GM12878 (cell line): ENCODE measurements at regions of chr17 and their contacts with region 1.

Region 1: GRCh38 chr17:28951991-28952975 is 965 bp upstream of the PHF12 start:
- DNase-seq: peak; percentile 100
- ATAC-seq: peak; percentile 82
- H3K4me3 ChIP-seq: peak overlapping the region; percentile 83
- H3K27ac ChIP-seq: peak overlapping the region; percentile 74
- H3K4me1 ChIP-seq: peaks cover 4% of the 10 kb centered on the region
- H3K27me3 ChIP-seq: no peaks in the 10 kb centered on the region
- CTCF ChIP-seq: no peak
- EP300 ChIP-seq: peak in 1 of 2 experiments; percentile 31; a peak in 1 of 4 replicates
- POLR2A ChIP-seq: peak; percentile 85
- RAD21 ChIP-seq: no peak

Region 2: DNA sequence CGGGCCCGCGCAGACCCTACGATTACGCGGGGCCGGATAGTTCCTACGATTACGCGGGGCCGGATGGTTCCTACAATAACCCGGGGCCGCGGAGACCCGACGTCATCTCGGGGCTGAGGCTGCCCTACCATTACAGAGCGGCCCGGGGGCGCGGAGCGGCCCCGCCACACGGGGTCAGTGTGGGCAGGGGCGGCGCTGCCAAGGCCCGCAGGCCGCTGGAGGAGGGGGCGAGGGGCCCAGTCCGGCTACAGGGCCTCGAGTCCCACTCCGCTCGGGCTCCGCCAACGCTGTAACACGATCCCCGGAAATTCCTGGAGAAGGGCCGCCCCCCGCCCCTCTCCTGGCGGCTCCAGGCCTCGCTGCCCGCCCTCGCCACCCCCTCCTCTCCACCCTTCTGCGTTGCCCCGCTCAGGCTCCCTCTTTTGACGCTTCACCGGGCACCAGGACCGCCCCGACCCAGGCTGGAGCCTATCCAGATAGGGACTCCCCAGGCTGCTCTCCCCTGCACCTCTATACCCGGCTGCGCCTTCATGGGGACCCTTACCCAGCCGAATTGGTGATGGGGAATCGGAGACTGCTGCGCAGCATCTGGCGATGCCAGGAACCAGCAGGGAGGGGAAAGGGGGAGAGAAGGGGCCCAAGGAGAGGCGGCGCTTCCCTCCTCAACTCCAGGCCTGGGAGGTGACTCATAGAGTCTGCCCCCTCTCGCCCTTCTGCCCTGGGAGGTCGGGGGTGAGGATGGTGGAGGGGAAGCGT is 234.5 kb before region 1 on chr17 and contains the start of gene RAB34:
- CTCF ChIA-PET with region 1: interaction called, 6 read pairs
- POLR2A ChIA-PET with region 1: interaction called, 13 read pairs
- RAD21 ChIA-PET with region 1: interaction called, 8 read pairs
- SMC1A ChIA-PET with region 1: interaction called, 15 read pairs
- in situ Hi-C with region 1: no loop called
- intact Hi-C with region 1: no loop called
- DNase-seq: no peak
- ATAC-seq: peak; percentile 31
- H3K4me3 ChIP-seq: peak within 1 kb of the TSS; percentile 55
- H3K27ac ChIP-seq: peak within 1 kb of the TSS; percentile 39
- H3K4me1 ChIP-seq: peaks cover 11% of the 10 kb centered on the region
- H3K27me3 ChIP-seq: no peaks in the 10 kb centered on the region
- CTCF ChIP-seq: peak in 2 of 3 experiments; percentile 15 to 32; a peak in 2 of 6 replicates
- EP300 ChIP-seq: no peak
- POLR2A ChIP-seq: peak; percentile 11; the same call in 1 of the 2 replicates
- RAD21 ChIP-seq: no peak
- polyA plus RNA-seq, gene RAB34: 14.4 to 32.6 TPM

Region 3: GRCh38 chr17:28889996-28890395 is 62.3 kb before region 1 on chr17:
- CTCF ChIA-PET with region 1: interaction called, 4 read pairs
- POLR2A ChIA-PET with region 1: interaction called, 24 read pairs
- RAD21 ChIA-PET with region 1: interaction called, 5 read pairs
- SMC1A ChIA-PET with region 1: interaction called, 8 read pairs
- in situ Hi-C with region 1: no loop called
- intact Hi-C with region 1: no loop called
- DNase-seq: no peak
- ATAC-seq: no peak
- H3K4me3 ChIP-seq: no peak overlapping the region
- H3K27ac ChIP-seq: no peak overlapping the region
- H3K4me1 ChIP-seq: peaks cover 59% of the 10 kb centered on the region
- H3K27me3 ChIP-seq: no peaks in the 10 kb centered on the region
- CTCF ChIP-seq: no peak
- EP300 ChIP-seq: no peak
- POLR2A ChIP-seq: no peak
- RAD21 ChIP-seq: no peak

Region 4: GRCh38 chr17:28902819-28903545 is 49.3 kb before region 1 on chr17 and contains the start of gene DHRS13:
- CTCF ChIA-PET with region 1: interaction called, 18 read pairs
- POLR2A ChIA-PET with region 1: interaction called, 11 read pairs
- RAD21 ChIA-PET with region 1: interaction called, 21 read pairs
- SMC1A ChIA-PET with region 1: interaction called, 6 read pairs
- in situ Hi-C with region 1: no loop called
- intact Hi-C with region 1: loop called (anchors 2 kb)
- DNase-seq: peak; percentile 81
- ATAC-seq: peak; percentile 91
- H3K4me3 ChIP-seq: peak within 1 kb of the TSS; percentile 82
- H3K27ac ChIP-seq: no peak within 1 kb of the TSS; the same call in 1 of the 2 replicates
- H3K4me1 ChIP-seq: peaks cover 16% of the 10 kb centered on the region
- H3K27me3 ChIP-seq: no peaks in the 10 kb centered on the region
- CTCF ChIP-seq: peak; percentile 89 to 100 (median 97)
- EP300 ChIP-seq: peak in 1 of 2 experiments; percentile 51; a peak in 1 of 4 replicates
- POLR2A ChIP-seq: peak; percentile 70
- RAD21 ChIP-seq: peak; percentile 54
- polyA plus RNA-seq, gene DHRS13: 0.18 TPM in 1 of 2 experiments, not detected in the other

Region 5: GRCh38 chr17:28937044-28937729 is 15.1 kb before region 1 on chr17:
- CTCF ChIA-PET with region 1: interaction called, 15 read pairs
- POLR2A ChIA-PET with region 1: interaction called, 3 read pairs
- RAD21 ChIA-PET with region 1: interaction called, 6 read pairs
- SMC1A ChIA-PET with region 1: interaction called, 11 read pairs
- in situ Hi-C with region 1: no loop called
- intact Hi-C with region 1: no loop called
- DNase-seq: no peak
- ATAC-seq: no peak
- H3K4me3 ChIP-seq: no peak overlapping the region
- H3K27ac ChIP-seq: no peak overlapping the region
- H3K4me1 ChIP-seq: peaks cover 11% of the 10 kb centered on the region; the same call in 1 of the 2 replicates
- H3K27me3 ChIP-seq: no peaks in the 10 kb centered on the region
- CTCF ChIP-seq: no peak
- EP300 ChIP-seq: no peak
- POLR2A ChIP-seq: no peak
- RAD21 ChIP-seq: no peak

Region 6: DNA sequence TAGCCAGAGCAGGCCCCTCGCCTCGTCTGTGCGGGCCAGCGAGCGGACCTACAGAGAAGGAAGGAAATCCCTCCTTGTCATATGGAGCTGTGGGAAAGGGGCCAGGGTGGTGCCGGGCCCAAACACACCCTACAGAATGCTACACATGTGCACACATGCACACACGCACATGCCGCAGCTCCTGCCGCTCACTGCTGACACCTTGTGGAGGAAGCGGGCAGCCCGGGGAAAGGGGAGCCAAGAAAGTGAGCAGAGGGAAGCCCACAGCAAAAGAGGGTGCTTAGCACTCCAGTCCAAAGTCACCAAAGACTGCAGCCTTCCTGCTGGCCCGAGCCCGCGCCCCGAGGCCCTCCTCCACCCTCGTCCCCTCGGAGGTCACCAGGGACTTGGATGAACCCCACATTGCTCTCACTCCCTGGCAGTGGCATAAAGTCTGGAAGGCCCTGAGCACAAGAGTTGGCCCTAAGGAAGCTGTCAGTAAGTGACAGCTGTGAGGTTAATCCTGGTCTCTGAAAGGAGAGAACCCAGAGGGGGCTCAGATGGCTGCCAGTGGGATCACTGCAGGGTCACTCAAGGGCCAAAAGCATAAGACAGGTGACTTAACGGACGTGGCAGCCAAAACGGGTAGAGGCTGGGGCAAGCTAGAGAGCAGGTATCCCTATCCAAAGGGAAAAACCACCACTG is 159.7 kb after region 1 on chr17:
- CTCF ChIA-PET with region 1: interaction called, 18 read pairs
- POLR2A ChIA-PET with region 1: no interaction called
- RAD21 ChIA-PET with region 1: interaction called, 6 read pairs
- SMC1A ChIA-PET with region 1: interaction called, 3 read pairs
- in situ Hi-C with region 1: no loop called
- intact Hi-C with region 1: no loop called
- DNase-seq: no peak
- ATAC-seq: peak; percentile 93
- H3K4me3 ChIP-seq: no peak overlapping the region
- H3K27ac ChIP-seq: no peak overlapping the region
- H3K4me1 ChIP-seq: no peaks in the 10 kb centered on the region
- H3K27me3 ChIP-seq: no peaks in the 10 kb centered on the region
- CTCF ChIP-seq: peak; percentile 90 to 97 (median 92)
- EP300 ChIP-seq: no peak
- POLR2A ChIP-seq: no peak
- RAD21 ChIP-seq: peak; percentile 70

Region 7: DNA sequence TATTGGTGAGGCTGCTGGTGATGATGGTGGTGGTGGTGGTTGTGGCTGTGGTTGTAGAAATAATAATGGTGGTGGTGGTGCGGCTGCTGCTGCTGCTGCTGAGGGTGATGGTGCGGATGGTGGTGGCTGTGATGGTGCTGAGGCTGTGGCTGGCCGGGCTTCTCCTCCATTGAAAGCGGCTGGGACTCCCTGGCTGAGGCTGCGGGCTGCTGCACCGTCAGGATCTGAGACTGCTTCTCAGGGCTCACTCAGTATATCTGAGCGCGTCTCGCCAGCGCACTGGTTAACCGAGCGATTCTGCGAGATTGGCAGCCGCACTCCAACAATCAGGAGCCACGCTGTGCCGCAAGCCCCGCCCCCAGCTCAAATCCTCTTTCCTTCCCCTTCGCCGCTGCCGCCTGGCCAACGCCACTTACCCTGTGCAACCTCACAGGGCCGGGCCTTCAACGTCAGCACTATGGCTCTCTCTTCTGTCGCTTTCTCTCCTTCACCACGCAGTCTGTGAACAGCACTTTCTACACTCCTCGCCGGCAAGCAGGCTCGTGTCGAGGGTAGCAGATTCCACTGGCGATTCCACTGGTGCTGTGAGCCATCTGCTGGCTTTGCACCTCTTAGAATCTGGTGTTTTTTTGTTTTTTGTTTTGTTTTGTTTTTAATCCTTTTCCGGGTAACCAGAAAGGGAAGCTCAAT is 341.8 kb after region 1 on chr17 and contains the start of gene NUFIP2:
- CTCF ChIA-PET with region 1: no interaction called
- POLR2A ChIA-PET with region 1: interaction called, 8 read pairs
- RAD21 ChIA-PET with region 1: interaction called, 3 read pairs
- SMC1A ChIA-PET with region 1: no interaction called
- in situ Hi-C with region 1: no loop called
- intact Hi-C with region 1: loop called (anchors 5 kb)
- DNase-seq: peak; percentile 95
- ATAC-seq: peak; percentile 94
- H3K4me3 ChIP-seq: peak within 1 kb of the TSS; percentile 89
- H3K27ac ChIP-seq: peak within 1 kb of the TSS; percentile 97
- H3K4me1 ChIP-seq: peaks cover 2% of the 10 kb centered on the region; the same call in 1 of the 2 replicates
- H3K27me3 ChIP-seq: no peaks in the 10 kb centered on the region
- CTCF ChIP-seq: no peak
- EP300 ChIP-seq: peak in 1 of 2 experiments; percentile 86; a peak in 2 of 4 replicates
- POLR2A ChIP-seq: peak; percentile 98
- RAD21 ChIP-seq: peak; percentile 3; the same call in 1 of the 2 replicates
- polyA plus RNA-seq, gene NUFIP2: 4.3 to 5.2 TPM